Left lung (tissue), 14 donors: ENCODE measurements at regions of chr11 and their contacts with region 1.

Region 1: GRCh38 chr11:40293655-40294348 is 1165.7 kb downstream of the LRRC4C start:
- DNase-seq: peak; percentile 39 to 92 (median 82)
- ATAC-seq: peak; percentile 99
- H3K4me3 ChIP-seq: peak overlapping the region; percentile 47
- H3K27ac ChIP-seq: peak overlapping the region; percentile 51 to 67
- H3K4me1 ChIP-seq: no peaks in the 10 kb centered on the region
- H3K27me3 ChIP-seq: peaks cover 0 to 33% of the 10 kb centered on the region in 2 donors
- CTCF ChIP-seq: peak; percentile 75 to 91

Region 2: DNA sequence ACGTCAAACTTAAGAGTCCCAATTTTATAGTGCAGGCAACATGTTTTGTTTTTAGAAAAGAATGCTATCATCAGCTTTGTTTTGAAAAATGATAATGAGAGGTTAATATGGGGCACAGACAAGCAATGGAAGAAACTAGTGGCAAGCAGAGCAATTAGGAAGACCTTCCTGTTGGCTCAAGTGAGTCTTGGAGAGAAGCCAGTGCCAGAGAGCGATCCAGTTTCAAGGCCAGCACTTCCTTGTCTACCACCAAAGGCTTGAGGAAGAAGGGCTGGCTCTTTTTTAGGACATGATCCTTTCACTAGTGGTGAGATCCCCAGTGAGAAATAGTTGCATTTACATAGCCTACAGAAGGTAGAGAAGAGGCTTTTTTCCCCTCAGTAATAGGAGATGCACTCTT is 175.0 kb before region 1 on chr11:
- intact Hi-C with region 1: no loop called
- DNase-seq: no peak
- ATAC-seq: no peak
- H3K4me3 ChIP-seq: no peak overlapping the region
- H3K27ac ChIP-seq: no peak overlapping the region
- H3K4me1 ChIP-seq: no peaks in the 10 kb centered on the region
- H3K27me3 ChIP-seq: no peaks in the 10 kb centered on the region
- CTCF ChIP-seq: no peak

Region 3: GRCh38 chr11:40130427-40130826 is 163.4 kb before region 1 on chr11:
- intact Hi-C with region 1: loop called in 1 of 2 experiments (anchors 10 kb)
- DNase-seq: no peak
- ATAC-seq: no peak
- H3K4me3 ChIP-seq: no peak overlapping the region
- H3K27ac ChIP-seq: no peak overlapping the region
- H3K4me1 ChIP-seq: no peaks in the 10 kb centered on the region
- H3K27me3 ChIP-seq: no peaks in the 10 kb centered on the region
- CTCF ChIP-seq: no peak